Vagina (tissue), 2 donors: ENCODE measurements at regions of chr3 and their contacts with region 1.

Region 1: GRCh38 chr3:22707470-22707869 is 495.7 kb upstream of the UBE2E2 start:
- DNase-seq: no peak
- H3K4me3 ChIP-seq: no peak overlapping the region
- H3K27ac ChIP-seq: no peak overlapping the region
- H3K4me1 ChIP-seq: no peaks in the 10 kb centered on the region
- H3K27me3 ChIP-seq: no peaks in the 10 kb centered on the region
- CTCF ChIP-seq: no peak
- POLR2A ChIP-seq: no peak

Region 2: GRCh38 chr3:22685597-22685996 is 21.9 kb before region 1 on chr3:
- intact Hi-C with region 1: loop called (anchors 1 kb)
- DNase-seq: no peak
- H3K4me3 ChIP-seq: no peak overlapping the region
- H3K27ac ChIP-seq: no peak overlapping the region
- H3K4me1 ChIP-seq: no peaks in the 10 kb centered on the region
- H3K27me3 ChIP-seq: no peaks in the 10 kb centered on the region
- CTCF ChIP-seq: no peak
- POLR2A ChIP-seq: no peak